Ascending aorta (tissue), 2 donors: ENCODE measurements at regions of chr1 and their contacts with region 1.

Region 1: GRCh38 chr1:11838349-11839272 is 9.0 kb downstream of the NPPA start:
- DNase-seq: peak in 1 of 2 donors; percentile 76
- H3K4me3 ChIP-seq: no peak overlapping the region
- H3K27ac ChIP-seq: no peak overlapping the region
- H3K4me1 ChIP-seq: peaks cover 0 to 5% of the 10 kb centered on the region in 2 donors
- H3K27me3 ChIP-seq: no peaks in the 10 kb centered on the region
- CTCF ChIP-seq: peak; percentile 91 to 98 (median 96)

Region 2: GRCh38 chr1:11805447-11806306 is 32.9 kb before region 1 on chr1 and contains the starts of genes CLCN6 and MTHFR:
- intact Hi-C with region 1: no loop called
- DNase-seq: peak; percentile 98 to 99
- H3K4me3 ChIP-seq: peak within 1 kb of the TSS; percentile 85
- H3K27ac ChIP-seq: peak within 1 kb of the TSS; percentile 97 to 99
- H3K4me1 ChIP-seq: peaks cover 11 to 26% of the 10 kb centered on the region in 2 donors
- H3K27me3 ChIP-seq: no peaks in the 10 kb centered on the region
- CTCF ChIP-seq: no peak
- total RNA-seq, gene CLCN6: 18.6 TPM
- total RNA-seq, gene MTHFR: 48.4 TPM

Region 3: DNA sequence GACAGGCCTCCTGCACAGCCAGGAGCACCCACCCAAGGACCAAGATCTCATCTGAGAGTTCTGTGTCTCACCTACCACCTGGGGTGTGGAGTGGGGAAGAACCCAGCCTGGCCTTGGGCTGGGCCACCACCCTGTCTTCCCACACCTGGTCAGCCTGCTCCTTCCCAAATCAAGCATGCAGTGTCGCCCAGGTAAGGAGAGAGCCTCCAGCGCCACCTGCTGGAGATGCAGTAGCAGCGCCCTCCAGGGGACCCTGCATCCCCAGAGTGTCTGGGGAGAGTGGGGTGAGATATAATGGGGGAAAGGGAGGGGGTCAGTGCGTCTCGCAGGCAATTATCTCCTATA is 55.3 kb after region 1 on chr1:
- intact Hi-C with region 1: loop called (anchors 2 kb)
- DNase-seq: no peak
- H3K4me3 ChIP-seq: no peak overlapping the region
- H3K27ac ChIP-seq: no peak overlapping the region
- H3K4me1 ChIP-seq: no peaks in the 10 kb centered on the region
- H3K27me3 ChIP-seq: peaks cover 4% of the 10 kb centered on the region
- CTCF ChIP-seq: peak; percentile 60 to 78 (median 62)

Region 4: DNA sequence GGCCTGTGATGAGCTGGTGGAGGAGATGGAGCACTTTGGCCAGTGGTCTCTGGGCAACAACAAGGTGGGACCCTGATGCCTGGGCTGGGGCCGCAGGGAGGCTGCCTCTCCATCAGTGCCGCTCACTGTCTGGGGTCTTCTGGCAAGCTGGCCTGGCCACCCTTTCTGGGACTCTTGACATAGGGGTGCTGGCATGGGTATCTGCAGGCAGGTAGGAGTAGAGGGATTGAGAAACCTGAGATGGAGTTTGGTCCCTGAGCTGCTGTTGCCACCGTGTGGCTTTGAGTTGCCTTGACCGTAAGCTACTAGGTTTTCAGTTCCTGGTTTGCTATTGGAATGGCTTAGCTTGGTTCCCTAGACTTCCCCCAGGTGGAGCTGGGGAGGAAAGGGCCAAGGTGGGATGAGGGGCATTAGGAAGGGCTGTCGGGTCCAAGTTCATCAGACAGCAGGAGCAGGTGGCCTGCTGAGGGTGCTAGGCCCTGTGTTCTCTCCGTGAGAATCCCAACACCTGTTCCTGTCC is 128.5 kb after region 1 on chr1:
- intact Hi-C with region 1: loop called (anchors 1 kb)
- DNase-seq: no peak
- H3K4me3 ChIP-seq: no peak overlapping the region
- H3K27ac ChIP-seq: no peak overlapping the region
- H3K4me1 ChIP-seq: no peaks in the 10 kb centered on the region
- H3K27me3 ChIP-seq: no peaks in the 10 kb centered on the region
- CTCF ChIP-seq: peak in 1 of 3 experiments; percentile 41

Region 5: GRCh38 chr1:11979851-11980675 is 141.5 kb after region 1 on chr1 and contains the start of gene MFN2:
- intact Hi-C with region 1: loop called (anchors 5 kb)
- DNase-seq: peak; percentile 87 to 97
- H3K4me3 ChIP-seq: peak within 1 kb of the TSS; percentile 91 to 92
- H3K27ac ChIP-seq: peak within 1 kb of the TSS; percentile 89 to 95
- H3K4me1 ChIP-seq: peaks cover 0 to 11% of the 10 kb centered on the region in 2 donors
- H3K27me3 ChIP-seq: no peaks in the 10 kb centered on the region
- CTCF ChIP-seq: no peak
- total RNA-seq, gene MFN2: 85.6 TPM

Region 6: DNA sequence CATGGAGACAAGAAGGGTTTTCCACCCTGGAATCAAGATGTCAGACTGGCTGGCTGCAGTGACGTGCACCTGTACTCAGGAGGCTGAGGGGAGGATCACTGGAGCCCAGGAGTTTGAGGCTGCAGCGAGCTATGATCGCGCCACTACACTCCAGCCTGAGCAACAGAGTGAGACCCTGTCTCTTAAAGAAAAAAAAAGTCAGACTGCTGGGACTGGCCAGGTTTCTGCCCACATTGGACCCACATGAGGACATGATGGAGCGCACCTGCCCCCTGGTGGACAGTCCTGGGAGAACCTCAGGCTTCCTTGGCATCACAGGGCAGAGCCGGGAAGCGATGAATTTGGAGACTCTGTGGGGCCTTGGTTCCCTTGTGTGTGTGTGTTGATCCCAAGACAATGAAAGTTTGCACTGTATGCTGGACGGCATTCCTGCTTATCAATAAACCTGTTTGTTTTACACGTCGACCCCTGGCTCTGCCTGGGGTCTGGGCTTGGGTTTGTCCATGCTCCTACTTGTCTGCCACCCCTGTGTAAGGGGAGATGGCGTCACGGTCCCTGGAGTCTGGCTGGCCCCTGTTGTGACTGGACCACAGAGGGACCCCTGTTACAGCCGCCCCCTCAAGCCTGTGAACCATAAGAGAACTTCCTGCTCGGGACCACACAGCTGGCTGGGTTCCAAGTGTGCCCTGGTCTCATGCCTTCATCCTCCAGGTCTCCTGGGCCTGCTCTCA is 370.3 kb after region 1 on chr1:
- intact Hi-C with region 1: loop called (anchors 1 kb)
- DNase-seq: peak in 1 of 2 donors; percentile 91
- H3K4me3 ChIP-seq: no peak overlapping the region
- H3K27ac ChIP-seq: no peak overlapping the region
- H3K4me1 ChIP-seq: no peaks in the 10 kb centered on the region
- H3K27me3 ChIP-seq: no peaks in the 10 kb centered on the region
- CTCF ChIP-seq: peak; percentile 82 to 95 (median 92)